ENCODE measurements at regions of chr11 and their contacts with region 1.

Region 1: GRCh38 chr11:12149672-12150225 is 39.4 kb downstream of the MICAL2 start:
- DNase-seq: peak; percentile 31
- H3K4me3 Mint-ChIP-seq: peak overlapping the region; percentile 43
- H3K27ac Mint-ChIP-seq: peak overlapping the region; percentile 96
- H3K4me1 Mint-ChIP-seq: peaks cover 74% of the 10 kb centered on the region
- H3K27me3 Mint-ChIP-seq: no peaks in the 10 kb centered on the region

Region 2: GRCh38 chr11:10561043-10561818 is 1588.5 kb before region 1 on chr11:
- intact Hi-C with region 1: no loop called
- DNase-seq: no peak
- H3K4me3 Mint-ChIP-seq: no peak overlapping the region
- H3K27ac Mint-ChIP-seq: no peak overlapping the region
- H3K4me1 Mint-ChIP-seq: no peaks in the 10 kb centered on the region
- H3K27me3 Mint-ChIP-seq: peaks cover 16% of the 10 kb centered on the region

Region 3: GRCh38 chr11:12110201-12110713 is 39.5 kb before region 1 on chr11 and contains the start of gene MICAL2:
- intact Hi-C with region 1: loop called (anchors 1 kb)
- DNase-seq: peak; percentile 88
- H3K4me3 Mint-ChIP-seq: peak within 1 kb of the TSS; percentile 90
- H3K27ac Mint-ChIP-seq: peak within 1 kb of the TSS; percentile 99
- H3K4me1 Mint-ChIP-seq: peaks cover 60% of the 10 kb centered on the region
- H3K27me3 Mint-ChIP-seq: no peaks in the 10 kb centered on the region
- total RNA-seq, gene MICAL2: 736 TPM in 2 replicates

Region 4: DNA sequence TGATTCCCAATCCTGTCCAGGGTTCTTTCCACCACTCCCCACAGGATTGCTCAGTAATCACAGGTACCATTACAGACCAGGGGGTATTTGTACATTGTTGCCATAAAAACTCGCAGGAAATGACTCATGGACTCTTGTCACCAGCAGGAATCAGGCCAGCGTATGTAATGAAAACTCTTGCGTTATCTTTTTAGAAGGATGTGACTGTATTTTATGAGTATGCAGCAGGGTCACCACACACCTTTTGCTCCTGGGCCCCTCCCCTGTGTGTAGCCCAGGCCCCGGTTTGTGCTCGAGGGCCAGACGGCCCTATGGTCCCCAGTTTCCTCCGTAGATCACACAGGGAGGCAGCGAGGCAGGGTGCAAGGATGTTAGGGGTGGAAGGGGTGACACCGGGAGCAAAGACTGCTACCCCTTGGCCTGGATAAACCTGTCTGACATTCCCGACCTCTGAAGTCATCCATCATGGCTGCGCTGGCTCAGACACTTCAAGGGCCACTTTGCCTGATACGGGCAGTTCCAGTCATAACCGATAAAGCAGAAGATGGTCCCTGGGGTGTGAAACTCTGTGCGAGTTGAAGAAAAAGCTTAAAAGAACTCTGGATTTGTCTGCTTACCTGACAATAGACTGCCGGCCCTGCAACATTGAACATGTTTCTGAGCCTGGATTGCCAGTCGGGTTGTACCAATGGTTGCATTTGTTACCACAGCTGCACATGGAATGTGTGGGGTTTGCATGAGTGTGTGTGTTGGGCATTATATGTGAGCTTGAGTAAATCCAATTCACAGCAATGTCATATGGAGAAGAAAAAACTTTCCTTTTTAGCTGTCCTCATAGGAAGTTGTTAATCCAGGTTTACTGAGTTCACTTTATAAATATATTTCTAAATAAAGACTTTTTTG is 17.6 kb after region 1 on chr11:
- intact Hi-C with region 1: loop called (anchors 1 kb)
- DNase-seq: no peak
- H3K4me3 Mint-ChIP-seq: no peak overlapping the region
- H3K27ac Mint-ChIP-seq: peak overlapping the region; percentile 83
- H3K4me1 Mint-ChIP-seq: peaks cover 66% of the 10 kb centered on the region
- H3K27me3 Mint-ChIP-seq: no peaks in the 10 kb centered on the region

Region 5: GRCh38 chr11:12185914-12186313 is 36.2 kb after region 1 on chr11:
- intact Hi-C with region 1: loop called (anchors 1 kb)
- DNase-seq: no peak
- H3K4me3 Mint-ChIP-seq: no peak overlapping the region
- H3K27ac Mint-ChIP-seq: peak overlapping the region; percentile 44
- H3K4me1 Mint-ChIP-seq: peaks cover 71% of the 10 kb centered on the region
- H3K27me3 Mint-ChIP-seq: no peaks in the 10 kb centered on the region

Region 6: GRCh38 chr11:12224537-12224893 is 74.8 kb after region 1 on chr11:
- intact Hi-C with region 1: loop called (anchors 1 kb)
- DNase-seq: peak; percentile 83
- H3K4me3 Mint-ChIP-seq: peak overlapping the region; percentile 51
- H3K27ac Mint-ChIP-seq: peak overlapping the region; percentile 91
- H3K4me1 Mint-ChIP-seq: peaks cover 54% of the 10 kb centered on the region
- H3K27me3 Mint-ChIP-seq: no peaks in the 10 kb centered on the region

Measured in activated T-helper 2 cell treated with anti-CD3 and anti-CD28 coated beads, Interferon-gamma antibody, Interleukin-2, Interleukin-4, amounts not matched to agents 10 μg/mL and 5 μg/mL and 100 μg/mL, durations not matched to agents 14 hours and 24 hours and 36 hours (primary cell).